Caki2 (cell line): ENCODE measurements at regions of chr1 and their contacts with region 1.

Region 1: DNA sequence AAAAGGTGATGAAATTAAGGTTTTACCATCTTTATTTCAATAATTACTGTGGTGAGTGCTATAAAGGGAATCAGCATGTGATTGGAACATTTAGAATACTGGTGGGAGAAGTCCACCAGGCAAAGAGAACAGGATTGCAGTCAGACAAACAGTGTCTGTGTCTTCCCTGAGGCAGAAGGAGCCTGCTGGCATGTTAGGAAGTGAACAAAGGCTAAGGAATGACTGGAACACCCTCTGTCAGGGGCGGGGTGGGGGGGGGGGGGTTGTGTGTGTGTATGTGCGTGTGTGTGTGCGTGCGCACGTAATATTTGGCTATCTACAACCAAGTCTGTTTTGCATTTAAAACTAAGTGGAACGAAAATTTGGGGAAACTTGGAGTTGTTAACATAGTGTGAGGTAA is 30.2 kb downstream of the SRRM1 start:
- DNase-seq: no peak

Region 2: DNA sequence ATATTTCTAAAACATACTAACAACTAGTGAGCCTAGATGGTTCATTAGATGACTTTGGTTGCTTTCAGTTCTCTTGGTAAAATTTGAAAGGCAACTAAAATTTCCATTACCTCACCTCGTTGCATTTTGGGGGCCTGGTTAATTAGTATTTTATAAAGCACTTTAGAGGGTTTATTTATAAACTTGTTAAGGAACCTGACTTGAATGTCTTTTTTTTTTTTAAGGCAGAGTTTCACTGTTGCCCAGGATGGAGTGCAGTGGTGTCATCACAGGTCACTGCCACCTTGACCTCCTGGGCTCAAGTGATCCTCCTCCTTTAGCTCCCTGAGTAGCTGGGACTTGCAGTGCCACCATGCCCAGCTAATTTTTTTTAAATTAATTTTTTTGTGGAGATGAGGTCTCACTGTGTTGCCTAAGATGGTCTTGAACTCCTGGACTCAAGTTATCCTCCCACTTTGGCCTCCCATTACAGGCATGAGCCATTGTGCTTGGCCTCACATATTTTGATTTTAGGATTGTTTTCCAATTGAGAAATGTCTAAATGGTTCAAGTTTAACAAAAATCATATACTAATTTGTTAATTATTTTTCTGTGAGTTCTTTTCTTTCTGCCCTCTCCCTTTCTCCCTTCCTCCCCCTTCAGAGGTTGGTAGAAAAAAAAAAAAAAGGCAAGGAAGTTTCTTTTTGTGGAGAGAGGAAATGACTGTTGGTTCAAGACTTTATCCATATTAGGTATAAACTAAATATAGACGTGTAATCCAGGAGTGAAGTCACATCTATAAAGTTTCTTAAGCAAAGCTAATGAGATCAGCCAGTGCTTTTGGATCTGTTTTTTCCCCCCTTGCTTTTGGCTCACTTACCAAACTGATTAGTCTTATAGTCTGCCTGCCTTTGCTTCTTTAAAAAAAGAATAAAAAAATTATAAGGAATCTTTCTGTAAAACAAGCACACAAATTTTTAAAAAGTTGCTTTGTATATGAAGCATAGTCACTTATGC is 96.6 kb after region 1 on chr1:
- in situ Hi-C with region 1: loop called (anchors 25 kb)
- DNase-seq: peak; percentile 64